ENCODE measurements at regions of chr2 and their contacts with region 1.

Region 1: DNA sequence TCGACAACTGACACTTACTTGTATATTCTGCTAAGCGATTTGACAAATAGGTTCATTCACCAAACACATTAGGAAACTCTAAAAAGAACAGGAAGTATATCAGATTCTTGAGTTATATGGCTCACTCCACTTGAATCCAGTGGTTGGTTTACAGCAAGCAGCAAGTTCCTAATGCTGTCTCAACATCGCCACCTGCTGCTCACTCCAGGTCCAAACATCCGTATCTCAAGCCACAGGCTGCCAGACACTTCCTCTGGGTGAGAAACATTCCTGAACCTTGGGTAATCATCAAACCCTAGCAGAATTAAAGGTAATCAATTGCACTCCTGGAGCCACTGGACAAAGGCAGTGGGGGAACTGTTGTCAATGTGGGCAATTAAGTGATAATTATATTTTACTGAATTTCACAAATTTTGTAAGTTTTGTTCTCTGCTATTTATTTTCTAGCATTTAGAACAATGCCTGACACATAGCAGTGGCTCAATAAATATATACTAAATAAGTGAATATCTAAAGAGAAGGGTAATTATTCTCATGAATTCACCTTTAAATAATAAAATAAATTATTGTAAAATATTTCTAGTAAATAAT is 107.1 kb upstream of the TTN start:
- DNase-seq: peak; percentile 79
- H3K4me3 Mint-ChIP-seq: no peak overlapping the region
- H3K27ac Mint-ChIP-seq: no peak overlapping the region
- H3K4me1 Mint-ChIP-seq: peaks cover 6% of the 10 kb centered on the region
- H3K27me3 Mint-ChIP-seq: no peaks in the 10 kb centered on the region

Region 2: GRCh38 chr2:178397002-178397605 is 517.2 kb before region 1 on chr2:
- CTCF ChIA-PET with region 1: interaction called, 4 read pairs
- POLR2A ChIA-PET with region 1: no interaction called
- intact Hi-C with region 1: loop called (anchors 5 kb)
- DNase-seq: no peak
- H3K4me3 Mint-ChIP-seq: no peak overlapping the region
- H3K27ac Mint-ChIP-seq: no peak overlapping the region
- H3K4me1 Mint-ChIP-seq: no peaks in the 10 kb centered on the region
- H3K27me3 Mint-ChIP-seq: peaks cover 2% of the 10 kb centered on the region

Region 3: DNA sequence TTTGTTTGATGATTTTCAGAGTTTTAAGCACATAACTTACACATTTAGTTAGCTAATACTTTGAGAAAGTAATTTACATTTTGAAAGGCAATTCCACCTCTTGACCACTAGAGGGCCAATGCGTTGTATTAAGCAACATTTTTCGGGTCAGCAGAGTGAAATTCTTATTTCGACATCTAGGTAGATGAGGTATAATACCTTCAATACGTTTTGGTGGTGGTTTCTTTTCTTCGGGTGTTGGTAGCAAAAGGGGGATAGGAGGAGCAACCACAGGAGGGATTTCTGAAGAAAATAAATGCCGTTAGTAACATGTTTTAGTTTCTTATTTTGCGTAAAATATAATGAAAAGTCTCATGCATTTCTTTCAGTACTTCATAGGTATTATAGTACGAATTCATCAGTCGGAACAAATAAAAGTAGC is 213.4 kb before region 1 on chr2:
- CTCF ChIA-PET with region 1: no interaction called
- POLR2A ChIA-PET with region 1: no interaction called
- intact Hi-C with region 1: loop called (anchors 1 kb)
- DNase-seq: no peak
- H3K4me3 Mint-ChIP-seq: no peak overlapping the region
- H3K27ac Mint-ChIP-seq: no peak overlapping the region
- H3K4me1 Mint-ChIP-seq: no peaks in the 10 kb centered on the region
- H3K27me3 Mint-ChIP-seq: peaks cover 3% of the 10 kb centered on the region

Region 4: DNA sequence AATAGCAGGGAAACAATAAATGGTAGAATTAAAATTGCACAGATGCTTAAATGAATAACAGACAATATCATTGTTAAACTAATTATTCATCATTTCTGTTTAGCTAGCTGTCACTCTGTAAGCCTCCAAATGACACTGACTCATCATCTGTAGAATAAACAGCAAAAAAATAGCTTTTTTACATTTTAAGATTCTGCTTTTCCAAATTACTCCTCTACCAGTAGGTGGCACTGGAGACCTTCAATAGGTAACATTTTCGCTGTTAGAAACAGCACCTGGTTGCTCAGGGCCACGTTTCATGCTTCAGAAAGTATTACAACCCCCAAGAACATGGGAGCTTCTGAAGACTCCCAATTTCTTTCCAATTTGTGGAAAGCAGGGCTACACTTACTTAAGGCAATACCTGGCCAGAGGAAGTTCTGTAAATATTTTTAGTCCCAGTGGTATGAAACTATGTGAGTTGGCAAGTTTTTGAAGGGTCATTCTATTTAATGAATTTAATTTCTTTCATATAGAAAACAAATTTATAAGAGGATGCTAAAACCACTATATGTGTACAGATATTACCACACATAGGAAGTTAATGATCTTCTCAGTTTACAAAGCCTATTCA is 152.5 kb before region 1 on chr2:
- CTCF ChIA-PET with region 1: interaction called, 10 read pairs
- POLR2A ChIA-PET with region 1: no interaction called
- intact Hi-C with region 1: loop called (anchors 1 kb)
- DNase-seq: peak; percentile 9
- H3K4me3 Mint-ChIP-seq: no peak overlapping the region
- H3K27ac Mint-ChIP-seq: no peak overlapping the region
- H3K4me1 Mint-ChIP-seq: no peaks in the 10 kb centered on the region
- H3K27me3 Mint-ChIP-seq: no peaks in the 10 kb centered on the region

Region 5: GRCh38 chr2:178796079-178796677 is 118.2 kb before region 1 on chr2:
- CTCF ChIA-PET with region 1: interaction called, 6 read pairs
- POLR2A ChIA-PET with region 1: no interaction called
- intact Hi-C with region 1: loop called (anchors 1 kb)
- DNase-seq: no peak
- H3K4me3 Mint-ChIP-seq: no peak overlapping the region
- H3K27ac Mint-ChIP-seq: no peak overlapping the region
- H3K4me1 Mint-ChIP-seq: no peaks in the 10 kb centered on the region
- H3K27me3 Mint-ChIP-seq: no peaks in the 10 kb centered on the region

Region 6: GRCh38 chr2:178891265-178891958 is 22.9 kb before region 1 on chr2:
- CTCF ChIA-PET with region 1: interaction called, 19 read pairs
- POLR2A ChIA-PET with region 1: no interaction called
- intact Hi-C with region 1: loop called (anchors 1 kb)
- DNase-seq: peak; percentile 61
- H3K4me3 Mint-ChIP-seq: no peak overlapping the region
- H3K27ac Mint-ChIP-seq: no peak overlapping the region
- H3K4me1 Mint-ChIP-seq: no peaks in the 10 kb centered on the region
- H3K27me3 Mint-ChIP-seq: no peaks in the 10 kb centered on the region

Region 7: GRCh38 chr2:178949584-178949983 is 35.2 kb after region 1 on chr2:
- CTCF ChIA-PET with region 1: no interaction called
- POLR2A ChIA-PET with region 1: no interaction called
- intact Hi-C with region 1: no loop called
- DNase-seq: no peak
- H3K4me3 Mint-ChIP-seq: no peak overlapping the region
- H3K27ac Mint-ChIP-seq: no peak overlapping the region
- H3K4me1 Mint-ChIP-seq: no peaks in the 10 kb centered on the region
- H3K27me3 Mint-ChIP-seq: no peaks in the 10 kb centered on the region